Ascending aorta (tissue), 2 donors: ENCODE measurements at regions of chr2 and their contacts with region 1.

Region 1: GRCh38 chr2:165015052-165015642 is 59.8 kb upstream of the SLC38A11 start:
- DNase-seq: no peak
- H3K4me3 ChIP-seq: no peak overlapping the region
- H3K27ac ChIP-seq: no peak overlapping the region
- H3K4me1 ChIP-seq: no peaks in the 10 kb centered on the region
- H3K27me3 ChIP-seq: no peaks in the 10 kb centered on the region
- CTCF ChIP-seq: peak; percentile 34 to 77 (median 75)

Region 2: DNA sequence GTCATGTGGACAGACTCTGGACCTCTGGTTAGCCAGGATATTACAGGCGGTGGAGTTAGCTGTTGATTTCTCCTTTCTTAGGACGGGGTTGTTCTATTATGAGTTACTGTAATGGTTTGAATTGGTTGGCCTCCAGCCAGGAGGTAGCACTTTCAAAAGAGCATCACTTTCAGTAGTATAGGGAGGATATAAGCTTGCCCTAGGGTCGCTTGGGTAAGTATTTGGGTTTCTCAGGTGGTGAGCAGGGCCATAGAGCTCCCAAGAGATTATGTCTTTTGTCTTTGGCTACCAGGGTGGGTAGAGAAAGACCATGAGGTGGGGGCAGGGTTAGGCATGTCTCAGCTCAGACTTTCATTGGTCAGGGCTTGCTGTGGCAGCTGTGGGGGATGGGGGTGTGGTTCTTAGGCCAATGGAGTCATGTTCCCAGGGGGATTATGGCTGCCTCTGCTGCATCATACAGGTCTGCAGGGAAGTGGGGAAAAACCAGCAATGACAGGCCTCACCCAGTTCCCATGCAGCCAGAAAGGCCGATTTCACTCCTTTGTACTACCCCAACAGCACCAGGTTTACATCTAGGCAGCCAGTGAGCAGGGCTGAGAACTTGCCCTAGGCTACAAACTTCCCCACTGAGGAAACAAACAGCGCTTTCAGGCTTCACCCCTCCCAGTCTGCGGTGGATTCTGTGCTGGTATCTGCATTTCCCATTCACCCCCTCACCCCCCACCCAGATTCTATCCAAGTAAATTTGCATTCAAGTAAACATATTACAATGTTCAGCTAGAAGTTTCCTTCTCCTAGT is 29.6 kb after region 1 on chr2:
- intact Hi-C with region 1: no loop called
- DNase-seq: no peak
- H3K4me3 ChIP-seq: no peak overlapping the region
- H3K27ac ChIP-seq: no peak overlapping the region
- H3K4me1 ChIP-seq: no peaks in the 10 kb centered on the region
- H3K27me3 ChIP-seq: no peaks in the 10 kb centered on the region
- CTCF ChIP-seq: no peak

Region 3: GRCh38 chr2:165203689-165204559 is 188.8 kb after region 1 on chr2 and contains the start of gene SCN3A:
- intact Hi-C with region 1: loop called (anchors 1 kb)
- DNase-seq: no peak
- H3K4me3 ChIP-seq: peak within 1 kb of the TSS in 1 of 2 donors; percentile 21
- H3K27ac ChIP-seq: no peak within 1 kb of the TSS
- H3K4me1 ChIP-seq: no peaks in the 10 kb centered on the region
- H3K27me3 ChIP-seq: no peaks in the 10 kb centered on the region
- CTCF ChIP-seq: peak; percentile 6 to 64 (median 54)
- total RNA-seq, gene SCN3A: 1.4 TPM